ENCODE measurements at regions of chr19 and their contacts with region 1.

Region 1: GRCh38 chr19:46661020-46661731 is at the start of gene DACT3:
- H3K4me3 ChIP-seq: peak within 1 kb of the TSS; percentile 45
- H3K27ac ChIP-seq: peak within 1 kb of the TSS; percentile 27; the same call in 1 of the 2 replicates
- H3K4me1 ChIP-seq: peaks cover 21% of the 10 kb centered on the region
- CTCF ChIP-seq: no peak

Region 2: GRCh38 chr19:46423188-46423587 is 238.0 kb before region 1 on chr19:
- CTCF ChIA-PET with region 1: no interaction called
- POLR2A ChIA-PET with region 1: no interaction called
- H3K4me3 ChIP-seq: no peak overlapping the region
- H3K27ac ChIP-seq: no peak overlapping the region
- H3K4me1 ChIP-seq: peaks cover 7% of the 10 kb centered on the region
- CTCF ChIP-seq: no peak

Region 3: GRCh38 chr19:46600384-46601317 is 60.5 kb before region 1 on chr19:
- CTCF ChIA-PET with region 1: interaction called, 34 read pairs
- POLR2A ChIA-PET with region 1: interaction called, 27 read pairs
- H3K4me3 ChIP-seq: peak overlapping the region; percentile 94
- H3K27ac ChIP-seq: peak overlapping the region; percentile 99
- H3K4me1 ChIP-seq: peaks cover 8% of the 10 kb centered on the region
- CTCF ChIP-seq: no peak

Region 4: GRCh38 chr19:46624958-46625661 is 36.1 kb before region 1 on chr19 and contains the start of gene PTGIR:
- CTCF ChIA-PET with region 1: interaction called, 327 read pairs
- POLR2A ChIA-PET with region 1: no interaction called
- H3K4me3 ChIP-seq: no peak within 1 kb of the TSS
- H3K27ac ChIP-seq: no peak within 1 kb of the TSS
- H3K4me1 ChIP-seq: no peaks in the 10 kb centered on the region
- CTCF ChIP-seq: no peak

Region 5: DNA sequence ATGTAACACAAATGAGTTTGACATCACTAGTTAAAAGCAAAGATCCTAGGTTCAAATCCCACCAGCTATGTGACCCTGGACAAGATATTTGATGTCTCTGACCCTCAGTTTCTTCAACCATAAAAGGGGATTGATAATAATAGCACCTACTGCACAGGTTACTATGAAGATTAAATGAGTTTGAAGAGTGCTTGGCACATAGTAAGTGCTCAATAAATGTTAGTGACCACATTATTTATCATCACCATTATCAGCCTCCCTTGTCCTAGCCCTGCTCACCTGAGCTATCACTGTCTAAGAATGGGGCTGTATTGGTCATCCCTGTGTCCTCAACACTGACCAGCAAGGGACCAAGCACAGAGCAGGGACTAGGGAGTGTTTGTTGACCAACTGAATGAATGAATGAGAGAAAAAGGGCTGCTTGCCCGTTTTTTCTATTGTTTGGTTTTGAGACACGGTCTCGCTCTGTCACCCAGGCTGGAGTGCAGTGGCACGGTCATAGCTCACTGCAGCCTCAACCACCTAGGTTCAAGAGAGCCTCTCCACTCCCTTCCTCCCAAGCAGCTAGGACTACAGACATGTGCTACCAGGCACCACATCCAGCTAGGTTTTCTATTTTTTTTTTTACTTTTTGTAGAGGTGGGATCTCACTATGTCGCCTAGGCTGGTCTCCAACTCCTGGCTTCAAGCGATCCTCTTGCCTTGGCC is 26.4 kb after region 1 on chr19:
- CTCF ChIA-PET with region 1: interaction called, 18 read pairs
- POLR2A ChIA-PET with region 1: no interaction called
- H3K4me3 ChIP-seq: no peak overlapping the region
- H3K27ac ChIP-seq: no peak overlapping the region
- H3K4me1 ChIP-seq: no peaks in the 10 kb centered on the region
- CTCF ChIP-seq: no peak

Region 6: DNA sequence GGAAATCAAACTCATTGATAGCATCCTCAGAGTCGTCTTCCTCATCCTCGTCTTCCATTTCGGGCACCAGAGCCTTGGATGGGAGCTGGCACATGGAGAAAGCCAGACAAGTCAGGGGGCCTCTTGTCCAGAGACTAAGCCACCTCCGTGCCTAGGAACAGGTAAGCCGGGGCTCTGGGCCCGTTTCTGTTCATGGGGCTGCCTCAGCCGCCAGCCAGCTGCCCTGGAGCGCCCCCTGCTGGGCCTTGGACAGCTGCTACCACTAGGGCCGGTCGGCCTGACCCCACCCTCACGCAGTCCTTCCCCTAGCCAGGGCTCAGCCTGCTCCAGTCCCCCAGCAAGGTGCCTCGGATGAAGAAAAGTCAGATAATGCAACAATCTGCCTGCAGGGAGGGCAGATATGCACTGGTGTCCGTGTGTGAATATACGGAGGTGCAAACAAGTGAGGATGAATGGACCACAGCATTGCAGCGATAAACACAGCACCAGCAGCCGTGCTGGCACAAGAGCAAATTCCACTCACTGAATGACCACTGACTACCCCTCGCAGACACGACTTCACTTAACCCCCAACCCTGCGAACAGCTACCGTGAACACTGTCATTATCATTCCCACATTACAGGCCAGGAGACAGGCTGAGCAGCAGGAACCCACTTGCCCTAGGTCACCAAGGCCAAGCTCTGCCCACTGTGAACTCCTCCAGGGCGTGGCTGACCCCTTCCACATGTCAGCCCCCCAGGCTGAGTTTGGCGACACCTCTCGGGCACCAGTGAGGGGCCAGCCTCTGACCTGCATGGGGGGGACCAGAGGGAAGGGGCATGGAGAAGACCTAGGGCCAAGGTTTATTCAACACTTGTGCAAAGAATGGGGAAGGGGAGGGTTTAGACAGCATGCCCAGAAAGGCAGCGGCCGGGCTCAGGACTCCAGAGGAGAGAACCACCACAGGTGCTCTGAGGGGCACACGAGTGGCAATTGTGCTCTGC is 67.8 kb after region 1 on chr19:
- CTCF ChIA-PET with region 1: interaction called, 12 read pairs
- POLR2A ChIA-PET with region 1: no interaction called
- H3K4me3 ChIP-seq: no peak overlapping the region
- H3K27ac ChIP-seq: no peak overlapping the region
- H3K4me1 ChIP-seq: no peaks in the 10 kb centered on the region; the same call in 1 of the 2 replicates
- CTCF ChIP-seq: peak; percentile 86

Region 7: GRCh38 chr19:46764817-46765291 is 103.7 kb after region 1 on chr19:
- CTCF ChIA-PET with region 1: no interaction called
- POLR2A ChIA-PET with region 1: no interaction called
- H3K4me3 ChIP-seq: no peak overlapping the region
- H3K27ac ChIP-seq: no peak overlapping the region
- H3K4me1 ChIP-seq: peaks cover 2% of the 10 kb centered on the region; the same call in 1 of the 2 replicates
- CTCF ChIP-seq: no peak